Gastrocnemius medialis (tissue), 4 donors: ENCODE measurements at regions of chr4 and their contacts with region 1.

Region 1: GRCh38 chr4:87838890-87839591 is 6.3 kb downstream of the MEPE start:
- DNase-seq: peak in 1 of 2 donors; percentile 14
- ATAC-seq: peak in 1 of 2 donors; percentile 31
- H3K4me3 ChIP-seq: no peak overlapping the region
- H3K27ac ChIP-seq: no peak overlapping the region
- H3K4me1 ChIP-seq: peaks cover 0 to 5% of the 10 kb centered on the region in 2 donors
- H3K27me3 ChIP-seq: no peaks in the 10 kb centered on the region
- CTCF ChIP-seq: peak; percentile 31 to 74 (median 52)
- POLR2A ChIP-seq: no peak

Region 2: DNA sequence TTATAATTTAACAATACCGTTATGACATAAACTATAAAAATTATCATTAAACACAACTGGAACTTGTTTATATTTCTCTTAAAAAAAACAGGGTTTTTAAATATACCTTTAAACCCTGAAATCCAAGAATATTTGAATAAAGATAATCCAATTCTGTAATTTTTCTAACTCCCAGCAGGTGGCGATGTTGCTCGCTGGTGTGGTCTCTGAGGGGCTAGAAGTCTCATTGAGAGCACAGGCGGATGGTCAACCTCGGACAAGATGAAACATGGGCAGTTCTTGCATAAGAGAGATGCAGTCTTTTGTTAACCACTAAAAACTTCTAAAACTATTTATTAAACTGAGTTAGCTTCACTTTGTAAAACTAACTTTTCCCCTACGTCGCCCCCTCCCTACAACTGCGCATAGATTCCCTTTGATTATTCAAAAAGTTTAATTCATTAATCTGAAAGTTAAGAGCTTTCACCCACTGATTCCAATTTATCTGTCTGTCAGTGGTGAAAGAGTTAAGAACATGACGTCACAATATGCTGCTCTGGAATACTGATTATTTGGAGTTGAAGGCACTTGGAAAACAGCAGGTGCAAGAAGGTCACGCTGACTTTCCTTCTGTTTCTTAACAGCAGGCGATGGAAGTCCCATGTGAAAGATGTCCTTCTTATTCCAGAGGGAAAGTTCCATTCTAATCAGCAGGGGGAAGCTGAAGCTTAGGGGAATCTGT is 159.4 kb before region 1 on chr4:
- in situ Hi-C with region 1: loop called (anchors 5 to 10 kb)
- intact Hi-C with region 1: loop called (anchors 2 kb)
- DNase-seq: peak; percentile 31 to 34
- ATAC-seq: peak; percentile 81 to 82
- H3K4me3 ChIP-seq: no peak overlapping the region
- H3K27ac ChIP-seq: peak overlapping the region in 3 of 4 donors; percentile 37 to 52 (median 38)
- H3K4me1 ChIP-seq: peaks cover 0 to 10% of the 10 kb centered on the region in 2 donors
- H3K27me3 ChIP-seq: no peaks in the 10 kb centered on the region
- CTCF ChIP-seq: peak; percentile 21 to 72 (median 57)
- POLR2A ChIP-seq: no peak

Region 3: DNA sequence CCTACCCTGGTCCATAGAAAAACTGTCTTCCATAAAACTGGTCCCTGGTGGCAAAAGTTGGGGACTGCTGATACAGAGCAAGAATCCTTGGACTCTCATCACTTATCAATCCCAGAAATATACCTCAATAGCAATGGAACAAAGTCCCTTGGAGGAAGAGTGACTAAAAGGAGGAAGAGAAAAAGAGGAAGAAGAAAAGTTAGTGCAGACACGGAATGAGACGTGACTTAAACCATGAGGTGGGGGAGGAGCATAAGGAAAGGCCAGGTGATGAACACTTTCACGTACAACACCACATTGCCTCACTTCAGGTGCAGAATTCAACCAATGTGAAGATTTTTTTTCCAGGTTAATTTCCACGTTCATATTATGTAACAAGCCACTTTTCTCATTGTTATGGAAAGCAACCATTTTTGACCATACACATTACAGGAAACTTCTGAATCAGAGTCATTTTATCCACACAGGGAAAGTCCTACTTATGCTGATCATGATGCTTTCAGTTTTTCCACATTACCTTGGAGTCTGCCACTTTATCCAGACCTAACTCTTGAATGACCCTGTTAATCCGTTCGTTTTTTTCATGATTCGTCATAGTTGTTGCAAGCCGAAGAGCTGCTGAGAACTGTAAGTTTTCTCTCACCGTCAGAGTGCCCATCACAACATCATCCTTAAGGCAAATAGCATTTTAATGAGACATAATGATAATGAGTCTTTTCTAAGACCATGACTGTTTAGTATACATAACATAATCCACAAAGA is 291.7 kb after region 1 on chr4:
- in situ Hi-C with region 1: no loop called
- intact Hi-C with region 1: no loop called
- DNase-seq: no peak
- ATAC-seq: no peak
- H3K4me3 ChIP-seq: no peak overlapping the region
- H3K27ac ChIP-seq: no peak overlapping the region
- H3K4me1 ChIP-seq: no peaks in the 10 kb centered on the region
- H3K27me3 ChIP-seq: no peaks in the 10 kb centered on the region
- CTCF ChIP-seq: no peak
- POLR2A ChIP-seq: no peak

Region 4: DNA sequence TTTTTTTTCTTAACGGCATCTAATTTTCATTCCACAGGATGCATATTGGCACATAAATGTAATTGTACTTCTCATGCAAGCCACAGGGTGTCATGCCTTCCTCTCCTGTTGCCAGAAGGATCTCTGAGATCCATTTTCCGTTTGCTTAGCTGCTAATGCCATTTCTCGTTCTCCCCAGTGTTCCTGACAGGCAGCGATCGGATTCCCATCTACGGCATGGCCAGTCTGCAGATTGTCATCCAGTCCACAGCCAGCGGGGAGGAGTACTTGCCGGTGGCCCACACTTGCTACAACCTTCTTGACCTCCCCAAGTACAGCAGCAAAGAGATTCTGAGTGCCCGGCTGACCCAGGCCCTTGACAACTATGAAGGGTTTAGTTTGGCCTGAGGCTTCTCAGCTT is 867.5 kb after region 1 on chr4:
- in situ Hi-C with region 1: no loop called
- intact Hi-C with region 1: no loop called
- DNase-seq: peak; percentile 23 to 62
- ATAC-seq: peak; percentile 98
- H3K4me3 ChIP-seq: no peak overlapping the region
- H3K27ac ChIP-seq: peak overlapping the region; percentile 61 to 75 (median 70)
- H3K4me1 ChIP-seq: peaks cover 5 to 12% of the 10 kb centered on the region in 2 donors
- H3K27me3 ChIP-seq: no peaks in the 10 kb centered on the region
- CTCF ChIP-seq: peak; percentile 40 to 73 (median 62)
- POLR2A ChIP-seq: no peak